GM12878 (cell line): ENCODE measurements at regions of chr4 and their contacts with region 1.

Region 1: GRCh38 chr4:102321260-102321995 is 23.9 kb downstream of the SLC39A8 start:
- DNase-seq: peak; percentile 63
- ATAC-seq: peak; percentile 87
- H3K4me3 ChIP-seq: peak overlapping the region; percentile 23; the same call in 1 of the 2 replicates
- H3K27ac ChIP-seq: peak overlapping the region; percentile 62
- H3K4me1 ChIP-seq: peaks cover 6% of the 10 kb centered on the region
- H3K27me3 ChIP-seq: no peaks in the 10 kb centered on the region
- CTCF ChIP-seq: no peak
- EP300 ChIP-seq: peak in 1 of 2 experiments; percentile 52; a peak in 1 of 4 replicates
- POLR2A ChIP-seq: no peak
- RAD21 ChIP-seq: no peak

Region 2: GRCh38 chr4:101835121-101835904 is 486.1 kb before region 1 on chr4:
- CTCF ChIA-PET with region 1: no interaction called
- POLR2A ChIA-PET with region 1: no interaction called
- RAD21 ChIA-PET with region 1: no interaction called
- SMC1A ChIA-PET with region 1: no interaction called
- in situ Hi-C with region 1: no loop called
- intact Hi-C with region 1: no loop called
- DNase-seq: no peak
- ATAC-seq: no peak
- H3K4me3 ChIP-seq: no peak overlapping the region
- H3K27ac ChIP-seq: no peak overlapping the region
- H3K4me1 ChIP-seq: no peaks in the 10 kb centered on the region
- H3K27me3 ChIP-seq: no peaks in the 10 kb centered on the region
- CTCF ChIP-seq: no peak
- EP300 ChIP-seq: no peak
- POLR2A ChIP-seq: no peak
- RAD21 ChIP-seq: no peak

Region 3: DNA sequence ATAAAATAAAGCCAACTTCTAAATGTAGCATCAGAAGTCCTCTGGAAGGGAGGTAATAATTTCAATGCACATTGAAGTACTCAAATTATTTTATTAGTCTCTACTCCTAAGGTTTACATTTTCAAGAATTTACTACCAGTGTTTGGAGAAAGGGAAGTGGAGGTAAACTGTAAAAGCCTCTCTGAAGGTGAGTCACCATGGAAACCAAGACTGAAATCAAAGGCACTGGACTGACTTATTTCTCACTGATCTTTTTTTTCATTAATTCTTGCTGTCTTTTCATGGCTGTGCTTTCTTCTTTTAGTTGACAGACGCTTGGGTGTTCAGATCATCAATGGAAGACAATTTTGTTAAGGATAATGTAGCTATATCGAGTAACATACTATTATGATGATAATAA is 14.2 kb after region 1 on chr4:
- CTCF ChIA-PET with region 1: interaction called, 15 read pairs
- POLR2A ChIA-PET with region 1: interaction called, 8 read pairs
- RAD21 ChIA-PET with region 1: interaction called, 26 read pairs
- SMC1A ChIA-PET with region 1: interaction called, 12 read pairs
- in situ Hi-C with region 1: no loop called
- intact Hi-C with region 1: no loop called
- DNase-seq: no peak
- ATAC-seq: peak; percentile 21; the same call in 2 of the 3 replicates
- H3K4me3 ChIP-seq: no peak overlapping the region
- H3K27ac ChIP-seq: no peak overlapping the region
- H3K4me1 ChIP-seq: no peaks in the 10 kb centered on the region
- H3K27me3 ChIP-seq: no peaks in the 10 kb centered on the region
- CTCF ChIP-seq: no peak
- EP300 ChIP-seq: no peak
- POLR2A ChIP-seq: no peak
- RAD21 ChIP-seq: no peak

Region 4: DNA sequence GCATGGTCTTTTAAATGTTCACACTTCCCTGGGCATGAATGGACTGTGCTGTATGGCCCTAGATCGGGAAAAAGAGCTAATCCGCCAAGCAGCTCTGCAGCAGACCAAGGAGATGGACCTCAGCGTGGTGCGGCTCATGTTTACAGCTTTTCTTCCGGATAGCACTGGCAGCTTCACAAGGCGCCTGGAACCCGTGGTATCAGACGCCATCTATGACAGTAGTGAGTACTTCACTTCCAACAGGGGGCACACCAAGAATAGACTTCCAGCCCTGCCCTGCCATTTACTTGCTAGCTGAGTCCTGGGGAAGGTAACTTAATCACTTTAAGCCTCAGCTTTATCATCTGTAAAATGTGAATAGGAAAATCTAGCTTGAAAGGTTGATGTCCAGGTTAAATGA is 257.4 kb after region 1 on chr4:
- CTCF ChIA-PET with region 1: no interaction called
- POLR2A ChIA-PET with region 1: no interaction called
- RAD21 ChIA-PET with region 1: no interaction called
- SMC1A ChIA-PET with region 1: no interaction called
- in situ Hi-C with region 1: no loop called
- intact Hi-C with region 1: loop called (anchors 10 kb)
- DNase-seq: no peak
- ATAC-seq: no peak; the same call in 2 of the 3 replicates
- H3K4me3 ChIP-seq: no peak overlapping the region
- H3K27ac ChIP-seq: no peak overlapping the region
- H3K4me1 ChIP-seq: peaks cover 5% of the 10 kb centered on the region
- H3K27me3 ChIP-seq: no peaks in the 10 kb centered on the region
- CTCF ChIP-seq: no peak; a peak in 1 of 6 replicates
- EP300 ChIP-seq: no peak
- POLR2A ChIP-seq: no peak
- RAD21 ChIP-seq: no peak